Activated CD4-positive, alpha-beta T cell treated with anti-CD3 and anti-CD28 coated beads, Interleukin-2, amount 10 ng/mL, durations not matched to agents 24 days and 14 days (primary cell): ENCODE measurements at regions of chr6 and their contacts with region 1.

Region 1: DNA sequence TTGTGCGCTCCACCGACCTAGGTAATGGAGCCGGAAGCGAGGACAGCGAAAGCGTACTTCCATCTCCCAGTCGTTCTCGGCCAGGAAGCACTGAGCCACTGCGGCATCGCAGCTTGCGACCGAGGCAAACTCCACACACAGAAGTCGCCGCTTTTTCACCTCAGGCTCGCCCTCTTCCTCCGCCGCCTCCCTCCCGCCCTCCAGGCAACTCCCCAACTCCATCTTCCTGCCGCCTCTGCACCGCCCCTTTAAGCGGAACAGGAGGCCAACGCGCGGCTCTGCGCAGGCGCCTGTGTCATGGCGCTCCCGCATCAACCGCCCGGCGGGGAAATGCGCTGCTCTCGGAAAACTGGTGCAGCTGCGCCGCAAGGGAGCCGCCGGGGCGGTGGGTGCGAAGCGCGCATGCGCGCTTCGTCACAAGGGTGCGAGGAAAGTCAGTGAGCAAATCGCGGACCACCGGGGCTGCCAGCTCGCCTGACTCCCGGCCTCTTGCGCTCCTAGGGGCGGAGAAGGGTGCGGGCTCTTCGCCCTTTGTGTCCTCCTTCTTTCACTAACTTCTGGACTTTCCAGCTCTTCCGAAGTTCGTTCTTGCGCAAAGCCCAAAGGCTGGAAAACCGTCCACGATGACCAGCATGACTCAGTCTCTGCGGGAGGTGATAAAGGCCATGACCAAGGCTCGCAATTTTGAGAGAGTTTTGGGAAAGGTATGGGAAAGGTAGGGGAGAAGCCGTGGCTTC is at the starts of genes ACOT13 and TDP2:
- DNase-seq: peak; percentile 99
- H3K4me3 Mint-ChIP-seq: peak within 1 kb of the TSS; percentile 90
- H3K27ac Mint-ChIP-seq: peak within 1 kb of the TSS; percentile 98
- H3K4me1 Mint-ChIP-seq: peaks cover 36% of the 10 kb centered on the region
- H3K27me3 Mint-ChIP-seq: no peaks in the 10 kb centered on the region
- total RNA-seq, gene ACOT13: 25.3 and 30.0 TPM in 2 replicates
- total RNA-seq, gene TDP2: 45.3 and 45.9 TPM in 2 replicates

Region 2: DNA sequence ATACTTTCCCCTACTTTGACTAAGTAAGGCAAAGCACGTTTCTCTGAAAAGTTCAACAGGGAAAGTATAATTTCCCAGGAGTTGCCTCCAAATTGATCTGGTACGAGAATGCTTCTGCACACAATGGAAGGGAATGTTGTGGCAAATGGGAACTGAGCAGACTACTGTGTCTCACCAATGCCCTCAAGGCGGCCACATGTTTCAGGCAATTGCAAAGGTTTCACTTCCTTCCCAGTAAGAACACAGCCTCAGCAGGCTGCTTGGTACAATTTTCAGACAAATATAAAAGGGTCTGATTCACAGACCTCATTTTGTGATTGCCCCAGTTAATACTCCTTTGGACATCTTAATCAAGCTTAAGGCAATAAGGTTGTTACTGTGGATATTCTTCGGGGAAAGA is 92.0 kb before region 1 on chr6:
- intact Hi-C with region 1: no loop called
- DNase-seq: no peak
- H3K4me3 Mint-ChIP-seq: no peak overlapping the region
- H3K27ac Mint-ChIP-seq: no peak overlapping the region
- H3K4me1 Mint-ChIP-seq: no peaks in the 10 kb centered on the region
- H3K27me3 Mint-ChIP-seq: peaks cover 9% of the 10 kb centered on the region

Region 3: DNA sequence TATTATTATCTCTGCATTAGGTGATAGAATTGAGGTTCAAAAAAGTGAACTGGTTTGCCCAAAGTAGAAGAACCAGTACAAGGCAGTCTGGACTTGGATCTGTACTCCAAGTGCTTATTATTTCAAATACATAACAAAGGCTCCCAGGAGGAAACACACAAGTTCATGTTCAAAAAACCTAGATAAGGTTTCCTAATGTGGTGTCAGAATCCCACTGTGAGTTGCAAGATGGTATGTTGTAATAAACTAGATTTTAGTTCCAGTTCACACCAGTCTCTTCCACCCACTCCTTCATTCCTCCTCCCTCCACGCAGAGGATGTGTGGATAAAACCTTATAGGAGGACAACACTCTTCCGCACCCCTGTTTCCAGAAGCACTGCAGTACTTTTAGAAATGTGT is 63.6 kb before region 1 on chr6:
- intact Hi-C with region 1: no loop called
- DNase-seq: no peak
- H3K4me3 Mint-ChIP-seq: no peak overlapping the region
- H3K27ac Mint-ChIP-seq: no peak overlapping the region
- H3K4me1 Mint-ChIP-seq: no peaks in the 10 kb centered on the region
- H3K27me3 Mint-ChIP-seq: peaks cover 12% of the 10 kb centered on the region

Region 4: DNA sequence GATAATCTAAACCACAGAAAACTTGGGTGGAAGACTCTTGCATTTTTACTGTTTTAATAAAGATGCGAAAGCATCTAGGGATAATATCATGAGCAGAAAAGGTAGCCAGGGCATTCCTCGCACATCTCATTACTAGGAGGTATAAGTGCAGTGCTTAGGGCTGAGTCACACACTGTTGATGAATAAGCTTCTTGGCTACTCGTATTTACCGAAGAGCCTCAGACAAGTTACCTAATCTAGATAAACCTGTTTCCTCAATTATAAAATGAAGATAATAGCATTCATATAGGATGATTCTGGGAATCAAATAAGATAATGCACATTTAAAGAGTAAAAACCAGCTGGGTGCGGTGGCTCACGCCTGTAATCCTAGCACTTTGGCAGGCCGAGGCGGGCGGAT is 20.0 kb before region 1 on chr6:
- intact Hi-C with region 1: loop called (anchors 2 kb)
- DNase-seq: no peak
- H3K4me3 Mint-ChIP-seq: peak overlapping the region; percentile 85
- H3K27ac Mint-ChIP-seq: no peak overlapping the region
- H3K4me1 Mint-ChIP-seq: peaks cover 15% of the 10 kb centered on the region
- H3K27me3 Mint-ChIP-seq: peaks cover 26% of the 10 kb centered on the region

Region 5: DNA sequence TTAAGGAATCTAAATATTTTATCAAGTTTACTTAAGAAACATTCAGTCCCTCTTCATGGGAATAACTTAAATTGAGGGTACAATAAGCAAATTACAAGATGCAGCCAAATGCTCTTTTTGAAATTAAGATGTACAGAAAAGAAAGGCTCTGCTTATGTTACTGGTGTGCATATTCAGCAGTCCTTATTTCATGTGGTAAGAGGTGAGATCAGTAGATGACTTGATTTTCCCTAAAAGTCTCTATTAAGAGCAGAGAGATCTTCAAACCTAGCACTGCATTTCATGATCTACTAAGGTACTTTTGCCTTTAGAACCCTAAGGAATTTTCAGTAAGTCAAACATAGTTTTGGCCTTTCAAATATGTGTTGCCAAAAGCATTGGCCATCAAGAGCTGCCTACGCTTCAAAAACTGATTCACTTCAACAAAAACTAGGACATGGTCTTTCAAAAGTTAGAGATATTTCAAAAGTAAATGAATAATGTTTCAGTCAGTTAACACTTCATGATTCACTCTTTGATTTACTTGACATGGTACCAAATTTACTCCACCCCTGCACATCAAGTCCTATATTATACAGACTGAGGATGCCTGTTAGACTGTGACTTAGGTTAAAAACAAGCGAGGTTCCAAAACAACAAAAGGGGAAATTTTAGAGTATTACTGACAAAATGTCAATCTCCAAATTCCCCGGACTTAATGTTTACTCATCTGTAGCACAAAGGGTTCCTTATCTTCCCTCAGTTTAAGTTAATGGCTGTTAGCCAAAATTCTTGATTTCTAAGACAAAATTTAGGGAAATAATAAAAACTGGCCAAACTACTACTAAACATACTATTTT is 32.9 kb after region 1 on chr6:
- intact Hi-C with region 1: loop called (anchors 5 kb)
- DNase-seq: no peak
- H3K4me3 Mint-ChIP-seq: no peak overlapping the region
- H3K27ac Mint-ChIP-seq: peak overlapping the region; percentile 71
- H3K4me1 Mint-ChIP-seq: peaks cover 21% of the 10 kb centered on the region
- H3K27me3 Mint-ChIP-seq: no peaks in the 10 kb centered on the region

Region 6: GRCh38 chr6:24743265-24743943 is 76.6 kb after region 1 on chr6:
- intact Hi-C with region 1: loop called (anchors 2 kb)
- DNase-seq: peak; percentile 62
- H3K4me3 Mint-ChIP-seq: peak overlapping the region; percentile 40
- H3K27ac Mint-ChIP-seq: peak overlapping the region; percentile 81
- H3K4me1 Mint-ChIP-seq: peaks cover 15% of the 10 kb centered on the region
- H3K27me3 Mint-ChIP-seq: no peaks in the 10 kb centered on the region

Region 7: DNA sequence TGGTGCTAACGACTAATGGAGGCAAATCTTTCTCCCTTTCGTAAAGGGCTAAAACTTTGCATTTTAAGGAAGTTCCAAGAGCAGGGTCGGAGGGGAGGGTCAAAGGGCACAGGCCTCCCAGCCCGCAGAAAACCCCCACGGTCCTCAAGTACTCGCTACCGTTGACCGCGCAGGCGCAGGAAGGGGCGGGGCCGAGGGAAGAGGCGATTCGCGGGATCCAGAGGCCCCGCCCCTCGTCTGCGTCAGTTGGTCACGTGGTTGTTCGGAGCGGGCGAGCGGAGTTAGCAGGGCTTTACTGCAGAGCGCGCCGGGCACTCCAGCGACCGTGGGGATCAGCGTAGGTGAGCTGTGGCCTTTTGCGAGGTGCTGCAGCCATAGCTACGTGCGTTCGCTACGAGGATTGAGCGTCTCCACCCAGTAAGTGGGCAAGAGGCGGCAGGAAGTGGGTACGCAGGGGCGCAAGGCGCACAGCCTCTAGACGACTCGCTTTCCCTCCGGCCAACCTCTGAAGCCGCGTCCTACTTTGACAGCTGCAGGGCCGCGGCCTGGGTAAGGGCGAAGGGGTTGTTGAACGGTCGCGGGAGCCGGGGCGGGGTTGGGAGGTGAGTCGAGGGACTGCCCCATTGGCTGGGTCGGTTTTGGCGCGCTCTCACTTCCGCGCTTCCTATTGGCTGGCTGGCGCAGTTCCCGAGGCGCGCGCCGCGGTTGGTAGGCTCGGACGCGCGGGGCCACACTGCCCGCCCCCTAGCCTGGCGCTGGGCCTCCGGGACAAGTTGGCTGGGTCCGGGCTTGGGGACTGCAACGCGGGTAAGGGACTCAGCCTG is 108.1 kb after region 1 on chr6 and contains the start of gene GMNN:
- intact Hi-C with region 1: loop called (anchors 2 kb)
- DNase-seq: peak; percentile 100
- H3K4me3 Mint-ChIP-seq: peak within 1 kb of the TSS; percentile 99
- H3K27ac Mint-ChIP-seq: peak within 1 kb of the TSS; percentile 99
- H3K4me1 Mint-ChIP-seq: peaks cover 32% of the 10 kb centered on the region
- H3K27me3 Mint-ChIP-seq: no peaks in the 10 kb centered on the region
- total RNA-seq, gene GMNN: 71.0 and 76.8 TPM in 2 replicates